ENCODE measurements at regions of chr11 and their contacts with region 1.

Region 1: GRCh38 chr11:44804449-44805437 is 78.0 kb downstream of the TSPAN18 start:
- DNase-seq: no peak
- H3K4me3 ChIP-seq: no peak overlapping the region
- H3K27ac ChIP-seq: no peak overlapping the region
- H3K4me1 ChIP-seq: no peaks in the 10 kb centered on the region
- H3K27me3 ChIP-seq: no peaks in the 10 kb centered on the region
- CTCF ChIP-seq: no peak
- POLR2A ChIP-seq: no peak

Region 2: GRCh38 chr11:44498089-44498871 is 306.5 kb before region 1 on chr11:
- intact Hi-C with region 1: loop called (anchors 5 kb)
- DNase-seq: no peak
- H3K4me3 ChIP-seq: no peak overlapping the region
- H3K27ac ChIP-seq: no peak overlapping the region
- H3K4me1 ChIP-seq: peaks cover 0 to 5% of the 10 kb centered on the region in 2 donors
- H3K27me3 ChIP-seq: no peaks in the 10 kb centered on the region
- CTCF ChIP-seq: no peak
- POLR2A ChIP-seq: no peak

Region 3: DNA sequence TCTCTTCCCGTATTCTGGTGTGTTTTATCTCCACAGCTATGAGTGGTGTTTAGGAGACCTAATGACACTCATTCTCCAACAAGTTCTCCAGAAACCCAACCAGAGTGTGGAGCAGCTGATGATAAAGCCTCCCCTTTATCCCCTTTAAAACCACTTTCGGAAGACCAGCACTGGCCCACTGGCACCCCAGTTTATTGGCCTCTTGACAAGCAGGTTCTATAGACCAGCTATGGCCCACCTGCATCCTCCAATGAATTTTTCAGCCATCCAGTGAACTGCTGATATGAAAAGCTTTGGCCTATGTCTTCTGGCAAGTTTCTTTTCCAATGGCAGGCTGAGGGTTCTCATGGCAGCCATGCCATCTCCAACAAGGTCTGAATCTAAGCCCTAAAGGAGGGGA is 833.3 kb after region 1 on chr11:
- intact Hi-C with region 1: no loop called
- DNase-seq: no peak
- H3K4me3 ChIP-seq: no peak overlapping the region
- H3K27ac ChIP-seq: no peak overlapping the region
- H3K4me1 ChIP-seq: no peaks in the 10 kb centered on the region
- H3K27me3 ChIP-seq: peaks cover 0 to 9% of the 10 kb centered on the region in 2 donors
- CTCF ChIP-seq: no peak
- POLR2A ChIP-seq: no peak

Measured in breast epithelium (tissue), 4 donors.